Activated CD4-positive, alpha-beta T cell treated with anti-CD3 and anti-CD28 coated beads for 36 hours (primary cell): ENCODE measurements at regions of chr1 and their contacts with region 1.

Region 1: GRCh38 chr1:1959840-1960479 is 40.9 kb upstream of the TMEM52 start:
- DNase-seq: peak; percentile 93
- ATAC-seq: peak; percentile 93
- H3K4me3 Mint-ChIP-seq: no peak overlapping the region
- H3K27ac Mint-ChIP-seq: peak overlapping the region; percentile 67
- H3K4me1 Mint-ChIP-seq: peaks cover 11% of the 10 kb centered on the region
- H3K27me3 Mint-ChIP-seq: peaks cover 17% of the 10 kb centered on the region

Region 2: DNA sequence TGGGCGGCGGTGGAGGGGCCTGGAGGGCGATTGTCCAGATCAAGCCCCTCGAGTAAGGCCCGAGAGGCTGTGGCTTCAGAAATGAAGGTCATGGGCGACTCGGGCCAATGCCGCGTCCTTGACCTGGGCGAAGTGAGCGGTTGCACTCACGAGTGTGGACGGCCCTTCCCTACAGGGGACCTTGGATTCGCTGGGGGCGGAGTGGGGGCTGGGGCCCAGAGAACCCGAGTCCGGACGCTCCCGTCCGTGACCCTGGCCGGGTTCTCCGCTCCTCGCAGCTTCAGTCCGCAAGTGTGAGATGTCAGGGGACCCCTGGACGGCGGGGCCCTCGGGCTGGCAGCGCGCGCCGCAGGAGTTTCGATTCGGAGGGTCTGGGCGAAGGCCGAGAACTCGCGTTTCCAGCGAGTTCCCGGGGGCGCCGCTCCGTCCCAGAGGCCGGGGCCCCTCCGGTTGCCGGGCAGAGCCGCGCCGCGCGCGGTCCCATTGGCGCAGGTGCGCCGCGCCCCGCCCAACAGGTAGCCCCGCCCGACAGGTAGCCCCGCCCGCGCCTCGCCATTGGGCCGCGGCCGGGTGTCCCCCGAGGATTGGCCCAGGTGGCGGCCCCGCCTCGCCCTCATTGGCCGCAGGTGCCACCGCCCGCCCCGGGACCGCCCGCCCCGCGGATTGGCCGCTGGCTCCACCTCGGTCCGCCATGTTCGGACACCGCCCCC is 89.9 kb after region 1 on chr1 and contains the start of gene PRKCZ:
- CTCF ChIA-PET with region 1: interaction called, 51 read pairs
- POLR2A ChIA-PET with region 1: no interaction called
- intact Hi-C with region 1: loop called (anchors 1 kb)
- DNase-seq: peak; percentile 95
- ATAC-seq: peak; percentile 98
- H3K4me3 Mint-ChIP-seq: peak within 1 kb of the TSS; percentile 68
- H3K27ac Mint-ChIP-seq: no peak within 1 kb of the TSS
- H3K4me1 Mint-ChIP-seq: peaks cover 24% of the 10 kb centered on the region
- H3K27me3 Mint-ChIP-seq: peaks cover 14% of the 10 kb centered on the region
- total RNA-seq, gene PRKCZ: 9.8 to 10.9 TPM